ENCODE measurements at regions of chr15 and their contacts with region 1.

Region 1: DNA sequence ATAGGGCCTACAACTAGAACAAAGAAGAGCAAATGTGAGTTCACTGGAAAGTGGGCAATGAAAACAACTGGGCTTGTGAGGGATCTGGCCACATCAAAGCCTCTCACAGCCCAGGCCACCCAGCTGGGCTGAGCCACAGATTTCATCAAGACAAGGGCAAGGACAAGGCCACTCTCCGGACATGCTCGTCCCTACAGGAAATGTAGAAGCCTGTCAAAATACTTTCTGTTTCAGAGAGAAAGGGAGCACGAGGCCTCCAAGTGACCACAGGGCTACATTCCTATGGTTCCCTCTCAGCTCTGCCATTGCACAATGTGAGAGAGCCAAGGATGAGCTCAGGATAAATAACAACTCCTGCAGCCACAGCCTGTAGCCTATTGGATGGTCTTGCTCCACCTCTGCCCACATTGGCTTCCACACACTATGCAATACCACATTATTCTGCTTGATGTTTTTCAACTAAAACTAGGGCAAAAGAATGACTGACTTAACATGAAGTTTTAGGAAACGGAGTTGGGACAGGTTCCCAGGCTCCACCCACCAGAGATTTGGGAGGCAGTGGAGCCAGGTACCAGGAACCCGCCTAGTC is 12.1 kb downstream of the TBC1D2B start:
- DNase-seq: peak; percentile 91 to 94
- H3K4me3 ChIP-seq: peak overlapping the region in 1 of 2 donors; percentile 22
- H3K27ac ChIP-seq: peak overlapping the region; percentile 81 to 87
- H3K4me1 ChIP-seq: peaks cover 0 to 100% (median 80%) of the 10 kb centered on the region in 4 donors
- H3K27me3 ChIP-seq: no peaks in the 10 kb centered on the region
- CTCF ChIP-seq: no peak

Region 2: DNA sequence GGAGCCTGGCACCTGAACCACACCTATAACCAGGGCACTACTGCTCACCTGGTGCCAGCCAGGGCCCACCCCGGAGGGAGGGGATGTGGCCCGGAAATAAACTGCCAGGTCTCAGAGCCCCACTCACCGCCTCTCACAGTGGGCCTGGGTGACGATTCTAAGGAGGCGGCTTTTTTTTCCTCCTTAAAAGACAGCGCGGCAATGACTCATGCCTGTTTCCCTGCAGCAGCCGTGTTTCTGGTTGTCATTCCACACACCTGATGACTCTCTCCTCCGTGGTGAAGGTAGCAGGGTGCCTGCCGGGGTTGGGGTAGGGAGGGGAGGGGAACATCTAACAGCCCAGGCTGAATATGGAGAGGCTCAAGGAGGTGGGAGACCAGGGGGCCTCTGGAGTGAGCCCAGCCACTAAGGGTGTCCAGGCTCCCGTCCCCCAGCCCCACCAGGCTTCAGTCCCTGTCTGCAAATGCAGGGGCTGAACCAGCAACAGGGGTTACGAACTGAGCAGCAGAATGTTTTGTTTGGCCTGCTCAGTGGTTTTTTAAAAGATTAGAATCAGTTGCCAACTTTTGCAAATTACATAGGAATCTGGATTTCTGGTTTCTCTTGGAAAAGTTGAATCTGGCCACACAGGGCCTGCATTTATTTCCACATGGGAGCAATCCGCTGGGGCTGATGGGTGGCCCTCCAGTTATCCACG is 305.3 kb before region 1 on chr15:
- intact Hi-C with region 1: no loop called
- DNase-seq: no peak
- H3K4me3 ChIP-seq: no peak overlapping the region
- H3K27ac ChIP-seq: no peak overlapping the region
- H3K4me1 ChIP-seq: peaks cover 0 to 7% (median 5%) of the 10 kb centered on the region in 4 donors
- H3K27me3 ChIP-seq: peaks cover 0 to 15% of the 10 kb centered on the region in 2 donors
- CTCF ChIP-seq: no peak

Region 3: DNA sequence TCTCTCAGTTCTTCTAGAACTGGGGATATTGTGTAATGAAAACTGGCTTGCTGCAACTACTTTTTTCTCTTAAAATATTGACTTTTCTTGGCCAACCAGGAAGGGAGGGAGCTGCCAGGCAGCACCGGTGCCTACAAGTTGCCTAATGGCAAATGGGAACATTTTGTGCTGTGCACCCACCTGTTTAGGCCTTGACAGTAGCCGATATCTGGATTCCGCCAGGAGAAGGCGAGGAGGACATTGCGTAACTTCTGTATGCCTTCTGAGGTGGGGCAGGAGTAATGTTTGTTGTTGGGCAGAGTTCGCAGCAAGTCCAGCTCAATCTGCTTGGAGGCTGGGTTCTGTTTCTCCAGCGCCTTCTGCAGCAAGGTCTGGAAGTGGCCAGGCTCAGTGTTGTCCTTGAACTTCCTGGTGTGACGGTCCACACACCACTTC is 52.7 kb before region 1 on chr15:
- intact Hi-C with region 1: loop called (anchors 5 kb)
- DNase-seq: peak in 1 of 2 donors; percentile 60
- H3K4me3 ChIP-seq: no peak overlapping the region
- H3K27ac ChIP-seq: no peak overlapping the region
- H3K4me1 ChIP-seq: peaks cover 0 to 14% (median 10%) of the 10 kb centered on the region in 4 donors
- H3K27me3 ChIP-seq: no peaks in the 10 kb centered on the region
- CTCF ChIP-seq: no peak

Measured in tibial artery (tissue), 4 donors.